Activated T-helper 2 cell treated with anti-CD3 and anti-CD28 coated beads, Interferon-gamma antibody, Interleukin-2, Interleukin-4, amounts not matched to agents 10 μg/mL and 5 μg/mL and 100 μg/mL, durations not matched to agents 14 hours and 24 hours and 36 hours (primary cell): ENCODE measurements at regions of chr5 and their contacts with region 1.

Region 1: DNA sequence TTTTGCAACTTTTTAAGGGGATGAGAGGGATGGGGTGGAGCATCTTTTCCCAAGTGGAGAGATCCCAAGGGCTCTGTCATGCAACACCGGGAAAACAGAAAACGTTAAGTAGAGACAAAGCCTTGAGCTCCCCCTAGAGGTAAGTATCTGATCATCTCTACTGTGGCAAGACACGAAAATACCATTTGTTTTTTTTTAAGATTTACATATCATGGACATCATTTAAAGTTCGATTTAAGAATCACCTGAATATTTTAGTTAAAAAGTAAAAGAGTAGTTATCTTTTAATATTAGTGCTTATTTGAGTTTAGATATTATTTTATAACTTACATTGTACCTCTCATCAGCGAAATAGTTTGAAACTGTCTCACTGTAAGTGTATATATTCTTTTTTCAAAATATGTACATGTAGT is 200.4 kb downstream of the LRRC70 start:
- DNase-seq: no peak
- H3K4me3 Mint-ChIP-seq: no peak overlapping the region
- H3K27ac Mint-ChIP-seq: no peak overlapping the region
- H3K4me1 Mint-ChIP-seq: peaks cover 5% of the 10 kb centered on the region
- H3K27me3 Mint-ChIP-seq: peaks cover 5% of the 10 kb centered on the region

Region 2: GRCh38 chr5:61840361-61840760 is 938.7 kb before region 1 on chr5:
- intact Hi-C with region 1: no loop called
- DNase-seq: no peak
- H3K4me3 Mint-ChIP-seq: no peak overlapping the region
- H3K27ac Mint-ChIP-seq: no peak overlapping the region
- H3K4me1 Mint-ChIP-seq: no peaks in the 10 kb centered on the region
- H3K27me3 Mint-ChIP-seq: peaks cover 2% of the 10 kb centered on the region

Region 3: DNA sequence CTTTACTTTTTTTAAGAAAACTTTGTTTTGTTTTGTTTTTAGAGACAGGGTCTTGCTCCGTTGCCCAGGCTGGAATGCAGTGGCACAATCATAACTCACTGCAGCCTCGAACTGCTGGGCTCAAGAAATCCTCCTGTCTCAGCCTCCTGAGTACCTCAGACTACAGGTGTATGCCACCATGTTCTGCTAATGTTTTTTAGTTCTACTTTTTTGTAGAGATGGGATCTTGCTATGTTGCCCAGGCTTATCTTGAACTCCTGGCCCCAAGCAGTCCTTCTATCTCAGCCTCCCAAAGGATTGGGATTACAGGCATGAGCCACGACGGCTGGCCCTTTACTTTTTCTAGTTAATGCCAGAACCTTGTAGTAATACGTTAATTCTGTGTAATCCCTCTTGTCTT is 330.5 kb before region 1 on chr5:
- intact Hi-C with region 1: loop called (anchors 5 kb)
- DNase-seq: no peak
- H3K4me3 Mint-ChIP-seq: no peak overlapping the region
- H3K27ac Mint-ChIP-seq: no peak overlapping the region
- H3K4me1 Mint-ChIP-seq: no peaks in the 10 kb centered on the region
- H3K27me3 Mint-ChIP-seq: no peaks in the 10 kb centered on the region

Region 4: DNA sequence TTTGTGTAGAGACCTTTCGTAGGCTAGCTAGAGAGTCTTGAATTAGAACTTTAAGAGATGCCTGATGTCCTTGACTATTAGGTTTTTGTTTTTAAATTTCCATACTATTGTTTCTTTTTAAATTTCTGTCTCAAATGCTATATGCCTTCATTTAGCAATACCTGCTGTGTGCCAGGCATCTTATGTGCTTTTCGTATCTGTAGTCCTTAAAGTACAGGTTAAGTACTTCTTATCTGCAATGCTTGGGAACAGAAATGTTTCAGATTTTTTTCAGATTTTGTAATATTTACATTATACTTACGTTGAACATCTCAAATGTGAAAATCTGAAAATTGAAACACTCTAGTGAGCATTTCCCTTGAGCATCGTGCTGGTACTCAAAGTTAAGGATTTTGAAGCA is 317.5 kb before region 1 on chr5:
- intact Hi-C with region 1: loop called (anchors 1 kb)
- DNase-seq: no peak
- H3K4me3 Mint-ChIP-seq: no peak overlapping the region
- H3K27ac Mint-ChIP-seq: no peak overlapping the region
- H3K4me1 Mint-ChIP-seq: peaks cover 2% of the 10 kb centered on the region
- H3K27me3 Mint-ChIP-seq: no peaks in the 10 kb centered on the region

Region 5: GRCh38 chr5:62795926-62796325 is 16.9 kb after region 1 on chr5:
- intact Hi-C with region 1: no loop called
- DNase-seq: no peak
- H3K4me3 Mint-ChIP-seq: no peak overlapping the region
- H3K27ac Mint-ChIP-seq: no peak overlapping the region
- H3K4me1 Mint-ChIP-seq: no peaks in the 10 kb centered on the region
- H3K27me3 Mint-ChIP-seq: no peaks in the 10 kb centered on the region